Head of caudate nucleus (tissue), 42 donors: ENCODE measurements at regions of chr3 and their contacts with region 1.

Region 1: GRCh38 chr3:183591881-183592521 is 36.5 kb upstream of the KLHL6 start:
- DNase-seq: peak in 1 of 42 donors; percentile 3

Region 2: GRCh38 chr3:183502237-183503181 is 89.5 kb before region 1 on chr3:
- intact Hi-C with region 1: loop called (anchors 10 kb)
- DNase-seq: peak; percentile 21 to 86 (median 67)